ENCODE measurements at regions of chrX and their contacts with region 1.

Region 1: DNA sequence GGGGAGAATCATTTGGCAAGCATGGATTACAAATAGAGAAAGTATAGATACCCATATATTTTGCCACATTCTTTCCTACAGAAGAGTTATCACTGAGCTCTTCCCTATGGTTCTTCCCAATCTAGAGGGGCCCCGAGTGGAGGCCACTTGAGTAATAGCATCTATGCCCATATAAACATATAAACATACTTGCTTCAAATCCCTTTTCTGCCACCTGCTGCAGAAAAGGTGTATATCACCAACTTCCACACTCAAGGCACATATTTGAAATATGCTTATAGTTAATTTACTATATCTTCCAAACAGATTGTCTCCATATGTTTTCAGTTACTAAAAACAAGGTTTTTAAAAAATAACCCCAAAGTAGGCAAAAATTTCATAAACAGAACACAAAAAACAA is 642.8 kb upstream of the DIPK2B start:
- DNase-seq: no peak
- H3K4me3 ChIP-seq: no peak overlapping the region
- H3K4me3 Mint-ChIP-seq: no peak overlapping the region
- H3K27ac Mint-ChIP-seq: no peak overlapping the region
- H3K4me1 ChIP-seq: no peaks in the 10 kb centered on the region
- H3K4me1 Mint-ChIP-seq: no peaks in the 10 kb centered on the region
- H3K27me3 ChIP-seq: no peaks in the 10 kb centered on the region
- H3K27me3 Mint-ChIP-seq: no peaks in the 10 kb centered on the region
- CTCF ChIP-seq: no peak

Region 2: DNA sequence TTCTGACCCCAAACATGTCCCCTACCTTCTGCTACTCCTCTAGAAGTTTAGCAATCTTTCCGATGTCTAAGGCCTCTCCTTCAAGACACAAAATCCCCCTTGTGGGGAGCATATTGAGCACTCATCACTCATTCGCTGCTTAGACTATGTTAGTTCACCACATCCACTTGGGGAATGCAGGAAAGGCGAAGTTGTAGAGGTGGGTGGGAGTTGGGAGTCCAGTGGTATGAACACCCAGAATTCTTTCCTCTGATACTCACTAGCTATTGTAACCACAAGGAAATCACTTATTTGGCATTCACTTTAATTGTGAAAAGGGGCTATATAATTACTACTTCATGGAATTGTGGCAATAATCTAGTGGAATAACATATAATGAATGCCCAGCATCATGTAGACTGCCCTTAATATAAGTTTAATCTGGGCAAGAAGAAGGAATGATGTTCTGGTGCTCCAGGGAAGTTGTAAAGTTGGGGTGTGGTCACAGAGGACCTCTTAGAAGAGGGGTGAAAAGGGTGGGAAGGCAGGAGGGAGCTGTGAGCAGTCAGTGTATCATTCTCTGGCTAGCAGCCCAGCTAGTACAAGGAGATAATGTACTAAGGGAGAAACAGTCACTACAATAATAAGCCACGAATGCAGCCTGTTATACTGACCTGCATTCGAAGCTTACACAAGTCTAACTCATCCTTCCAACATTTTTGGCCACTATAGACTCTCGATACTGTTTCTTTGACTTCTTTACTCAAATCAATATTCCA is 174.7 kb before region 1 on chrX:
- CTCF ChIA-PET with region 1: no interaction called
- POLR2A ChIA-PET with region 1: no interaction called
- intact Hi-C with region 1: no loop called
- DNase-seq: no peak
- H3K4me3 ChIP-seq: no peak overlapping the region
- H3K4me3 Mint-ChIP-seq: no peak overlapping the region
- H3K27ac Mint-ChIP-seq: no peak overlapping the region
- H3K4me1 ChIP-seq: no peaks in the 10 kb centered on the region
- H3K4me1 Mint-ChIP-seq: no peaks in the 10 kb centered on the region
- H3K27me3 ChIP-seq: no peaks in the 10 kb centered on the region
- H3K27me3 Mint-ChIP-seq: no peaks in the 10 kb centered on the region
- CTCF ChIP-seq: no peak

Region 3: GRCh38 chrX:45801554-45801953 is 42.0 kb before region 1 on chrX:
- CTCF ChIA-PET with region 1: interaction called, 3 read pairs
- POLR2A ChIA-PET with region 1: no interaction called
- intact Hi-C with region 1: loop called (anchors 5 kb)
- DNase-seq: no peak
- H3K4me3 ChIP-seq: no peak overlapping the region
- H3K4me3 Mint-ChIP-seq: no peak overlapping the region
- H3K27ac Mint-ChIP-seq: no peak overlapping the region
- H3K4me1 ChIP-seq: no peaks in the 10 kb centered on the region
- H3K4me1 Mint-ChIP-seq: peaks cover 1% of the 10 kb centered on the region
- H3K27me3 ChIP-seq: no peaks in the 10 kb centered on the region
- H3K27me3 Mint-ChIP-seq: no peaks in the 10 kb centered on the region
- CTCF ChIP-seq: peak in 1 of 2 experiments; percentile 23